WTC11 (cell line): ENCODE measurements at regions of chr17 and their contacts with region 1.

Region 1: GRCh38 chr17:2416010-2416734 is 15.3 kb upstream of the MNT start:
- DNase-seq: peak; percentile 94
- ATAC-seq: peak; percentile 61
- H3K4me3 Mint-ChIP-seq: no peak overlapping the region
- H3K27ac Mint-ChIP-seq: peak overlapping the region; percentile 71
- H3K4me1 Mint-ChIP-seq: peaks cover 5% of the 10 kb centered on the region
- H3K27me3 Mint-ChIP-seq: no peaks in the 10 kb centered on the region
- CTCF ChIP-seq: peak; percentile 92

Region 2: DNA sequence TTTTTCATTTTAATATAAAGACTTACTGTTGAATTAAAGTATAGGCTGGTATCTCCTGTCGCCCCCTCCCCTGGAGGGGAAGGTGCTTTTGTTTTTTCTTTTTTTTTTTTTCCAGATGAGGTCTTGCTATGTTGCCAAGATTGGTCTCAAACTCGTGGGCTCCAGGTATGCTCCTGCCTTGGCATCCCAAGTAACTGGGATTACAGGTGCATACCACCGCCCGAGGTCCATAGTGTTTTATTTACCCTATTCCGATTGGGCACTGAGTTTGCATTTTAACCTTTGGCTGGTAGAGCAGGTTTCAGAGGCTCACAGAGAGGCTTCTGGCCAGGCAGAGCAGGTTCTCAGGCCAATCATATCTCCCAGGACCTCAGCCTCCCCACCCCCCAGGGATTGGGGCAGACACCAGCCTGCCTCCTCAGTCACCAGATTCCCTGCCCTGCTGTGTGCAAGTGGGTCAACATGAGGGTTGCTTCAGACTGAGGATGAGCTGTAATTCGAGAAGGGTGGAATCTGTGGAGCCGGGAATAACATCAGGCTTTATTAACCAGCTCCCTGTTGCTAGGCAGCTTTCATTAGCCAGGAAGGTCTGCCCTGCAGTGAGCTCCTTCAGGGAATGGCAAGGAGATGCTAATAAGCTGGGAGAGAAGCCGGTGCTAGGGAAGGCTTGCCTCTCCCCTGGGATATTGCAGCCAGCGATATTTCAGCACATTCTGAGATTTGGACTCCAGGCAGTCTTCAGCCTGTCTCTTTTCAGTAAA is 68.4 kb before region 1 on chr17:
- CTCF ChIA-PET with region 1: interaction called, 24 read pairs
- POLR2A ChIA-PET with region 1: no interaction called
- DNase-seq: peak; percentile 83
- ATAC-seq: peak; percentile 94
- H3K4me3 Mint-ChIP-seq: peak overlapping the region; percentile 61
- H3K27ac Mint-ChIP-seq: peak overlapping the region; percentile 99
- H3K4me1 Mint-ChIP-seq: peaks cover 32% of the 10 kb centered on the region
- H3K27me3 Mint-ChIP-seq: no peaks in the 10 kb centered on the region
- CTCF ChIP-seq: no peak

Region 3: GRCh38 chr17:2380226-2380922 is 35.8 kb before region 1 on chr17:
- CTCF ChIA-PET with region 1: interaction called, 268 read pairs
- POLR2A ChIA-PET with region 1: interaction called, 11 read pairs
- DNase-seq: no peak
- ATAC-seq: no peak
- H3K4me3 Mint-ChIP-seq: no peak overlapping the region
- H3K27ac Mint-ChIP-seq: peak overlapping the region; percentile 52; the same call in 1 of the 2 replicates
- H3K4me1 Mint-ChIP-seq: peaks cover 13% of the 10 kb centered on the region
- H3K27me3 Mint-ChIP-seq: no peaks in the 10 kb centered on the region
- CTCF ChIP-seq: no peak

Region 4: GRCh38 chr17:2401426-2402221 is 14.5 kb before region 1 on chr17:
- CTCF ChIA-PET with region 1: interaction called, 60 read pairs
- POLR2A ChIA-PET with region 1: interaction called, 6 read pairs
- DNase-seq: peak; percentile 100
- ATAC-seq: peak; percentile 36
- H3K4me3 Mint-ChIP-seq: peak overlapping the region; percentile 89
- H3K27ac Mint-ChIP-seq: peak overlapping the region; percentile 100
- H3K4me1 Mint-ChIP-seq: peaks cover 25% of the 10 kb centered on the region
- H3K27me3 Mint-ChIP-seq: 0 out of 2 replicates have a peak, but pooled peaks cover 5% of the 10 kb centered on the region
- CTCF ChIP-seq: no peak